MCF 10A (cell line): ENCODE measurements at regions of chr4 and their contacts with region 1.

Region 1: DNA sequence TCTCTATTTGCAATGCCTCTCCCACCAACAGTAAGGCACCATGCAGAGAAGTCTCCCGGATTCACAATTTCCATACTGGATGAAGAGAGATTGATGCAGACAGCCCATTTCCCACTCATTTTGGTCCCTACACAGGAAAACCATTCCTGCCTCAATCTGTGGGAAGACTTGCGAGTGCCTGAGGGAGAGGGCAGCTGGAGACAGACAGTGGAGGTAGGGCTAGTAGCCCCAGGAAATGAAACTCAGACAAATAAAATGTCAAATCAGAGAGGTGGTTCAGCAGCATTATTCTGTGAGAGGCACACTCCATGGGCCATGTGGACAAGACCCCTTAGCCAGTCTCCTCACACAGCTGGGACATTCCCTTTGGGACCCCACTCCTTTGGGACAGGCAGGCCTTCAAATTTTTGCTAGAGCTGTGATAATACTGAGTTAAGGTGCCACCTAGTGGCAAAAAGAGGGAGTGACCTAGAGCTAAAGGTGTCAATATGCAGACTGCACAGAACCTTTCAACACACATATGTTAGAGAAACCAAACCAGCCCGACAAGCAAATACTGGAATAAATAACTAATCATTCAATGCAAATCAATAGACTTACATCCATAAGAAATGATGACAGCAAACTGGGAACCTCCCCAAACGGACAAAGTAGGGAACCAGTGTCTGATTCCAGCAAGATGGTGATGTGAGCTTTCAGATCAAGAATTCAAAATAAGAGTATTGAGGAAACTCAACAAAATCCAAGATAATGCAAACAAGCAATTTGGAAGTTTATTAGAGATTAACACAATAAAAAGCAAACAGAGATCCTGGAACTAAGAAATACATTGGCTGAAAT is 1865.3 kb upstream of the AGA start:
- DNase-seq: peak; percentile 69
- H3K4me3 Mint-ChIP-seq: no peak overlapping the region
- H3K27ac Mint-ChIP-seq: no peak overlapping the region
- H3K4me1 Mint-ChIP-seq: peaks cover 7% of the 10 kb centered on the region
- H3K27me3 Mint-ChIP-seq: no peaks in the 10 kb centered on the region
- CTCF ChIP-seq: peak; percentile 60

Region 2: DNA sequence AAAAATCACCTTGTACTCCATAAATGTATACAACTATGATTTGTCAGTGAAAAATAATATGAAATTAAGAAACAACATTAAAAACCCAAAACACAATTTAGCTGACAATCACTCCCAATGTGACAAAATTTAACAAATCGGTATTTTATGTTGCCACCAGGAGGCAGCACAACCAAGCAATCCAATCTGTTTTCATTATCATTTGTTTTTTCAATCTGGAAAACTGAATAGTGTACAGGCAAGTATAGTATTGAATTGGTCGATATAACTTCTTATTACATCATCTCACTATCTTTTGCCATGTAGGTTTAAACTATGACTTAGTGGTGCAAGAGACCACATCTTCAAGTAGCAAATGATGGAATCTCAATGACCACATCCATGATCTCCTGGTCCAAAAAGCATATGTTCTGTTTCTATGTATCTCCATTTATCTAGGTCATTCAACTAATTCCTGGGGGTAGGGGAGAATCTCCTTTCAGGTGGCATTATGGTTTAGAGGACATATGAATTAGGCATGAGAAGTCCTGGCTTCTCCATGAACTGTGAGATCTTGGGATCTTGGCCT is 1752.4 kb before region 1 on chr4:
- CTCF ChIA-PET with region 1: interaction called, 3 read pairs
- POLR2A ChIA-PET with region 1: no interaction called
- intact Hi-C with region 1: loop called (anchors 1 kb)
- DNase-seq: peak; percentile 61
- H3K4me3 Mint-ChIP-seq: no peak overlapping the region
- H3K27ac Mint-ChIP-seq: no peak overlapping the region
- H3K4me1 Mint-ChIP-seq: no peaks in the 10 kb centered on the region
- H3K27me3 Mint-ChIP-seq: no peaks in the 10 kb centered on the region
- CTCF ChIP-seq: peak; percentile 77

Region 3: DNA sequence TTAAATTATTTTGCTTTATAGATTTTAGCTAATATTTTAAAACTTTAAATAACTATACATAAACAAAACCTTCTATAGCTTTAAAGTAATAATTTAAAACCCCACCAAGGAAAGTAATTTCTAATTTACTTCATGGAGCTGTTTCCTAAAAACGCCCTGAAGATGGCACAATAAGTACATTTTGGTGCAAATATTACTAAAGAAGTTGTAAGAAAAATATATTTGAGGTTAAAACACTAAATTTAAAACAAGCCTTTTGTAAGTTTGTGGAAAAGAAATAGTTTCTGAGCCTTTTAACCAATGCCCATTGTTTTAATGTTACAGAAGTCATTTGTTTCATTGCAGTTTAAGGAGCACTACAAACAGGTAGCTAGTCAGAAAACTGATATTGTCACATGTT is 1727.9 kb before region 1 on chr4:
- CTCF ChIA-PET with region 1: interaction called, 6 read pairs
- POLR2A ChIA-PET with region 1: no interaction called
- intact Hi-C with region 1: loop called (anchors 1 kb)
- DNase-seq: peak; percentile 18
- H3K4me3 Mint-ChIP-seq: no peak overlapping the region
- H3K27ac Mint-ChIP-seq: no peak overlapping the region
- H3K4me1 Mint-ChIP-seq: peaks cover 8% of the 10 kb centered on the region
- H3K27me3 Mint-ChIP-seq: no peaks in the 10 kb centered on the region
- CTCF ChIP-seq: peak; percentile 30

Region 4: DNA sequence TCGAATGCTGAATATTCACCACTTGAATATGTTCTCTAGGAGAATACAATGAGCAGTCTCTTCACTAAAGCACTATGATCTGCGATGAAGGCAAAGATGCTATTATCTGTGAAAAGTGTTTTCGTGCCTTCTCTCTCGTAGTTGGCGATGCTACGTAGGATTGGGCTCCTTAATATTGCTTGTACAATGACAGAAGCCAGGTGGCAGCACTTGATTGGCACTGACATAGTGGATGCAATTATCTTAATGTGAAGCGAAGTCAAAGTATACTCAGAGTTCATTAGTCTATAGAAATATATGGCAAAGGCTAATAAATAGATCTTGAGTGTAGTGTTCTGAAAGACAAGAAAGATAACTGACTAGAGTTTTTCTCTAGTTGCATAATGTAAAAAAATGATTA is 729.6 kb before region 1 on chr4:
- CTCF ChIA-PET with region 1: interaction called, 16 read pairs
- POLR2A ChIA-PET with region 1: no interaction called
- intact Hi-C with region 1: loop called (anchors 1 kb)
- DNase-seq: peak; percentile 18
- H3K4me3 Mint-ChIP-seq: no peak overlapping the region
- H3K27ac Mint-ChIP-seq: no peak overlapping the region
- H3K4me1 Mint-ChIP-seq: no peaks in the 10 kb centered on the region
- H3K27me3 Mint-ChIP-seq: no peaks in the 10 kb centered on the region
- CTCF ChIP-seq: no peak

Region 5: GRCh38 chr4:178599521-178599920 is 708.0 kb before region 1 on chr4:
- CTCF ChIA-PET with region 1: interaction called, 10 read pairs
- POLR2A ChIA-PET with region 1: no interaction called
- intact Hi-C with region 1: loop called (anchors 1 kb)
- DNase-seq: peak; percentile 28
- H3K4me3 Mint-ChIP-seq: no peak overlapping the region
- H3K27ac Mint-ChIP-seq: no peak overlapping the region
- H3K4me1 Mint-ChIP-seq: no peaks in the 10 kb centered on the region
- H3K27me3 Mint-ChIP-seq: no peaks in the 10 kb centered on the region
- CTCF ChIP-seq: peak; percentile 42

Region 6: GRCh38 chr4:178970433-178971140 is 336.9 kb before region 1 on chr4:
- CTCF ChIA-PET with region 1: interaction called, 3 read pairs
- POLR2A ChIA-PET with region 1: no interaction called
- intact Hi-C with region 1: loop called (anchors 5 kb)
- DNase-seq: peak; percentile 52
- H3K4me3 Mint-ChIP-seq: no peak overlapping the region
- H3K27ac Mint-ChIP-seq: peak overlapping the region; percentile 10
- H3K4me1 Mint-ChIP-seq: peaks cover 18% of the 10 kb centered on the region
- H3K27me3 Mint-ChIP-seq: no peaks in the 10 kb centered on the region
- CTCF ChIP-seq: no peak